GM10248 (cell line): ENCODE measurements at regions of chr1 and their contacts with region 1.

Region 1: DNA sequence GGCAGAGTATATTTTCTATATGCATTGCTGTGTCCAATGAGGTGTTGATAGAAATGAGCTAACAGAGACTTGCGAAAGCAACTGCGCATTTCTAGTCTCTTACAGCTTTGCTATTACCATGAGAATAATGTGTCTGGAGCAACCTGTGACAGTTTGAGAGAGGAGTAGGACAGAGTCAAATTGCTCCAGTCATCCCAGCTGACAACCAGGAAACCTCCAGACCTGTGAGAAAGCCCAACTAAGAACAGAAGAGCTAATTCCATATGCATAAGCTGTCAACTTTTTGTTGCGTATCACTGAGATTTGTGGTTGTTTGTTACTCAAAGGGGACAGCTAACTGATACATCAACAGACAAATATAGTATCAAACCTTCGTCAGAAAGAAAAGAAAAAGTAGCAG is 354.1 kb upstream of the LRRC7 start:
- DNase-seq: no peak
- CTCF ChIP-seq: no peak

Region 2: DNA sequence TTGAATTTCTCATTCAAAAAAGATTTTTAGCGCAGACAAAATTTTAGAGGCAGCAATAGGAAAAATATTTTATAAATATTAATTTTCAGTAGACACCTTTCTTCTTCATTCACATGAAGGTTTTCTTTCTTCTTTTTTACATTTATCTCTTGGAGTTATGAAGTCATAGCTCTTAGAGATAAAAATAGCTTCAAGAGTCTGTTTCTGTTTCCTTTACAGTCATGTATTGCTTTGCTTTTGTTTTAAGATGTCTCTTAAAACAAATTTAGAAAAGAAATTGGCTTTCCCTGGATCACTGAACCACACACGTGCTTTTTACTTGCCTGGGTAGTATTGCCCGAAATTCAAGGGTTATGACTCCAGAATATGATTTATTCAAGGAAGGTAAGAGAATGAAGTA is 15.8 kb before region 1 on chr1:
- CTCF ChIA-PET with region 1: interaction called, 10 read pairs
- POLR2A ChIA-PET with region 1: no interaction called
- DNase-seq: no peak
- CTCF ChIP-seq: no peak